Activated CD8-positive, alpha-beta T cell treated with anti-CD3 and anti-CD28 coated beads for 36 hours (primary cell): ENCODE measurements at regions of chr3 and their contacts with region 1.

Region 1: GRCh38 chr3:122679085-122679881 is 1.4 kb upstream of the PARP14 start:
- DNase-seq: peak; percentile 93
- ATAC-seq: peak; percentile 67
- H3K4me3 Mint-ChIP-seq: peak overlapping the region; percentile 97
- H3K27ac Mint-ChIP-seq: peak overlapping the region; percentile 97
- H3K4me1 Mint-ChIP-seq: peaks cover 50% of the 10 kb centered on the region
- H3K27me3 Mint-ChIP-seq: no peaks in the 10 kb centered on the region
- CTCF ChIP-seq: peak; percentile 77

Region 2: GRCh38 chr3:122392868-122393844 is 286.1 kb before region 1 on chr3:
- CTCF ChIA-PET with region 1: interaction called, 17 read pairs
- POLR2A ChIA-PET with region 1: interaction called, 3 read pairs
- intact Hi-C with region 1: no loop called
- DNase-seq: no peak
- ATAC-seq: peak; percentile 63
- H3K4me3 Mint-ChIP-seq: no peak overlapping the region
- H3K27ac Mint-ChIP-seq: no peak overlapping the region
- H3K4me1 Mint-ChIP-seq: peaks cover 53% of the 10 kb centered on the region
- H3K27me3 Mint-ChIP-seq: no peaks in the 10 kb centered on the region
- CTCF ChIP-seq: peak; percentile 85

Region 3: GRCh38 chr3:122458992-122459391 is 220.3 kb before region 1 on chr3:
- CTCF ChIA-PET with region 1: interaction called, 17 read pairs
- POLR2A ChIA-PET with region 1: no interaction called
- intact Hi-C with region 1: no loop called
- DNase-seq: no peak
- ATAC-seq: no peak
- H3K4me3 Mint-ChIP-seq: no peak overlapping the region
- H3K27ac Mint-ChIP-seq: no peak overlapping the region
- H3K4me1 Mint-ChIP-seq: peaks cover 7% of the 10 kb centered on the region
- H3K27me3 Mint-ChIP-seq: no peaks in the 10 kb centered on the region
- CTCF ChIP-seq: peak; percentile 70

Region 4: GRCh38 chr3:122533931-122534334 is 145.3 kb before region 1 on chr3:
- CTCF ChIA-PET with region 1: interaction called, 11 read pairs
- POLR2A ChIA-PET with region 1: no interaction called
- intact Hi-C with region 1: no loop called
- DNase-seq: peak; percentile 69
- ATAC-seq: peak; percentile 99
- H3K4me3 Mint-ChIP-seq: no peak overlapping the region
- H3K27ac Mint-ChIP-seq: peak overlapping the region; percentile 37
- H3K4me1 Mint-ChIP-seq: peaks cover 38% of the 10 kb centered on the region
- H3K27me3 Mint-ChIP-seq: no peaks in the 10 kb centered on the region
- CTCF ChIP-seq: no peak

Region 5: DNA sequence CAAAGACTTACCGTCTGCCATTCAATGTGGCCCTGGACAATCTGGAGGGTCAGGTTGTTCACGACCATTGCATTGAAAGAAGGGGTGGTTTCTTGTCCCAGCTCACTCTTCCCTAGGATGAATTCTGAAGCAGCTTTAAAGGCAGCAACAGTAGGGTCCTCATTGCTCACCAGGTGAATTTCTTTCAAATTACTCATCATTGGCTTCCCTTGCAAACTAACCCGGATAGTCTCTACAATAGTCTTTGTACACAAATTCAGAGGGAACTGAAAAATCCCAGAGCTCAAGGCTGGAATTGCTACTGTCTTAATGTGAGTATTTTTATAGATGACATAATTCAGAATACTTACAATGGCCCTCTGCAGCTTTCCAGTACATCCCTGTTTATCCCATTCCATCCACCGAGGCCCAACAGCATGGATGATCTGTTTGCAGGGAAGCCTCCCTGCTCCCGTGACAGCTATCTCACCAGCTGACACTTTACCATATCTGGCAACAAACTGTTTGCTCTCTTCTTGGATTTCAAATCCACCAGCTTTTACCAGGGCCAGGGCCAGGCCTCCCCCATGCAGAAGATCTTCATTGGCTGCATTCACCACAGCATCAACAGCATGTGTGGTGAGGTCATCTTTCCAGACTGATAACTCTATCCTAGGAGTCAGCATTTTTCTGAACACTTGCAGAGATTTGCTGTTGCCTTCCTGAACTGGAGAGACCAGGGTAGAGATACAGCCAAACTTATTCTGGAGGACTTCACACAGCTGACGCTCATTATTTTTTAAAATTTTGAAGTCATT is 123.8 kb before region 1 on chr3:
- CTCF ChIA-PET with region 1: interaction called, 244 read pairs
- POLR2A ChIA-PET with region 1: interaction called, 15 read pairs
- intact Hi-C with region 1: loop called (anchors 1 kb)
- DNase-seq: no peak
- ATAC-seq: no peak
- H3K4me3 Mint-ChIP-seq: no peak overlapping the region
- H3K27ac Mint-ChIP-seq: no peak overlapping the region
- H3K4me1 Mint-ChIP-seq: peaks cover 8% of the 10 kb centered on the region
- H3K27me3 Mint-ChIP-seq: no peaks in the 10 kb centered on the region
- CTCF ChIP-seq: no peak

Region 6: DNA sequence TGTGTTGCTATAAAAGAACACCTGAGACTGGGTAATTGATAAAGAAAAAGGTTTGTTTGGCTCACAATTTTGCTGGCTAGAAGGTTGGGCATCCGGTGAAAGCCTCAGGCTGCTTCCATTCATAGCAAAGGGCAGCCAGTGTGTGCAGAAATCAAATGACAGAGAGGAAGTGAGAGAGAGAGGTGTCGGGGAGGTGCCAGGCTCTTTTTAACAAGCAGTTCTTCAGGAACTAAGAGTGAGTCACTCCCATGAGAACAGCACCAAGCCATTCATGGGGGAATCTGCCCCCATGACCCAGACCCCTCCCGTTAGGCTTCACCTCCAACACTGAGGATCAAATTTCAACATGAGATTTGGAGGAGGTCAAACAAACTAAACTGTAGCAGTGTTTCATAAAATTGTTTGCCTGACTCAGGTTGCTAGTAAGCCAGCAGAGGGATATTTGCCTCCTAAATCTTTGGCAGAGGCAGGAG is 106.3 kb before region 1 on chr3:
- CTCF ChIA-PET with region 1: interaction called, 19 read pairs
- POLR2A ChIA-PET with region 1: no interaction called
- intact Hi-C with region 1: loop called (anchors 5 kb)
- DNase-seq: peak; percentile 58
- ATAC-seq: peak; percentile 49
- H3K4me3 Mint-ChIP-seq: no peak overlapping the region
- H3K27ac Mint-ChIP-seq: peak overlapping the region; percentile 77
- H3K4me1 Mint-ChIP-seq: peaks cover 66% of the 10 kb centered on the region
- H3K27me3 Mint-ChIP-seq: no peaks in the 10 kb centered on the region
- CTCF ChIP-seq: no peak

Region 7: GRCh38 chr3:122942937-122943827 is 263.9 kb after region 1 on chr3:
- CTCF ChIA-PET with region 1: no interaction called
- POLR2A ChIA-PET with region 1: no interaction called
- intact Hi-C with region 1: no loop called
- DNase-seq: peak; percentile 50
- ATAC-seq: no peak
- H3K4me3 Mint-ChIP-seq: no peak overlapping the region
- H3K27ac Mint-ChIP-seq: no peak overlapping the region
- H3K4me1 Mint-ChIP-seq: peaks cover 9% of the 10 kb centered on the region
- H3K27me3 Mint-ChIP-seq: peaks cover 3% of the 10 kb centered on the region
- CTCF ChIP-seq: peak; percentile 70